ENCODE measurements at regions of chr4 and their contacts with region 1.

Region 1: DNA sequence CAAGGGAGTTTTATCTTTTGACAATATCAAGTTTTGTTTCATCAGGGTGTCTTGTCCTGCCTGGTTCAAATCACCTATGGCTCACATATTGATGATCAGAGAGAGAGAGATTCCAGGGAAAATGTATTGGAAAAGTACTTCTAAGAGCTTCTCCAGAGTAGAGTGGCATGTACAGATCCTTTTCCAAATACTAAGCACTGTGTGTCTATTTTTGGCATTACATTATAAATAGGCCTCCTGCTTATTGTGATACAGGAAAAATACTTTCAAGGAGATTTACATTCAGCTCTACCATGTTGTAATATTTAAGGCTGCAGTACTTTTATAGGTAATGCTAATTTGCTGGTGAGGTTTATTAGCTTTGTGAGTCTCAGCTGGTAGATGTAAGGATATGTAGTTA is 100.8 kb downstream of the DCK start:
- DNase-seq: no peak
- H3K4me3 Mint-ChIP-seq: no peak overlapping the region
- H3K27ac Mint-ChIP-seq: no peak overlapping the region
- H3K4me1 Mint-ChIP-seq: no peaks in the 10 kb centered on the region
- H3K27me3 Mint-ChIP-seq: no peaks in the 10 kb centered on the region
- CTCF ChIP-seq: no peak

Region 2: DNA sequence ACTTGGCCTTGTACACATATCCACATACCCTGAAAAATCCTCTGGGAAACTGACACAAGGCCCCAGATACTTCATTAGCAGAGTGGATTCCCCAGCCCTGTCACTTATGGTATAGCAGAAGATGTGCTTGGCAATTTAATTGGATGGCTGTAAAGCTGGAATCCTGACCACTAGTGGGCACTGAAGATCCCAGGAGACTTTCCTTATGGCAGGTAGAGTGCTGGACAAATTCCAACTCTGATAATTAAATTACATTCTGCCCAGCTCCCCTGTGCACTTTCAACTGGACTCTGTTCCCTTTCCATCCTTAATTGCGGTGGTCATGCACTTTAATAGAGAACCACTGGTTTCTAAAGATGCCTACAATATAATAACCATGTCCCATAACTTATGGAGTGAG is 19.1 kb after region 1 on chr4:
- CTCF ChIA-PET with region 1: no interaction called
- POLR2A ChIA-PET with region 1: no interaction called
- intact Hi-C with region 1: loop called (anchors 1 kb)
- DNase-seq: peak; percentile 27
- H3K4me3 Mint-ChIP-seq: no peak overlapping the region
- H3K27ac Mint-ChIP-seq: no peak overlapping the region
- H3K4me1 Mint-ChIP-seq: no peaks in the 10 kb centered on the region
- H3K27me3 Mint-ChIP-seq: no peaks in the 10 kb centered on the region
- CTCF ChIP-seq: no peak

Measured in MCF 10A (cell line).